Caco-2 (cell line): ENCODE measurements at regions of chr21 and their contacts with region 1.

Region 1: DNA sequence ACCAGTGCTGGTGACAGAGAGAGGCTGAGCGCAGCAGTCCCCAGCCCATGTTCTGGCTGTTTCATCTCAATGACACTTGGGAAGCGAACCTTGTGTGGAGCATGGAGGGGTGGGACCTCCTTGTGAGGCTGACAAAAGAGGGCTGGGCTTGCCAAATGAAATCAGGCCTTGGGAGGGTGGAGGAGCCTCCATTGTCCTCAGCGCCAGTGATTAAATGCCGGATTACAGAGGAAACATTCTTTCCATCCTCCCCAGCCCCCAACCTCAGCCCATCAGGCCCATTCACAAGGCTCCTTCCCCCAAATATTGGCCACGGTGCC is 63.3 kb upstream of the PAXBP1 start:
- DNase-seq: no peak
- H3K4me3 ChIP-seq: no peak overlapping the region
- H3K4me3 Mint-ChIP-seq: no peak overlapping the region
- H3K27ac Mint-ChIP-seq: no peak overlapping the region
- H3K4me1 ChIP-seq: no peaks in the 10 kb centered on the region
- H3K4me1 Mint-ChIP-seq: no peaks in the 10 kb centered on the region
- H3K27me3 ChIP-seq: no peaks in the 10 kb centered on the region; the same call in 1 of the 2 replicates
- H3K27me3 Mint-ChIP-seq: peaks cover 6% of the 10 kb centered on the region
- CTCF ChIP-seq: no peak

Region 2: GRCh38 chr21:32916522-32917099 is 81.7 kb after region 1 on chr21:
- CTCF ChIA-PET with region 1: no interaction called
- POLR2A ChIA-PET with region 1: no interaction called
- intact Hi-C with region 1: loop called (anchors 5 kb)
- DNase-seq: peak in 1 of 2 experiments; percentile 28
- H3K4me3 ChIP-seq: no peak overlapping the region
- H3K4me3 Mint-ChIP-seq: no peak overlapping the region
- H3K27ac Mint-ChIP-seq: no peak overlapping the region
- H3K4me1 ChIP-seq: no peaks in the 10 kb centered on the region
- H3K4me1 Mint-ChIP-seq: no peaks in the 10 kb centered on the region
- H3K27me3 ChIP-seq: no peaks in the 10 kb centered on the region; the same call in 1 of the 2 replicates
- H3K27me3 Mint-ChIP-seq: peaks cover 13% of the 10 kb centered on the region
- CTCF ChIP-seq: peak; percentile 22 to 32